Activated T-helper 2 cell treated with anti-CD3 and anti-CD28 coated beads, Interferon-gamma antibody, Interleukin-2, Interleukin-4, amounts not matched to agents 10 μg/mL and 5 μg/mL and 100 μg/mL, durations not matched to agents 14 hours and 24 hours and 36 hours (primary cell): ENCODE measurements at regions of chr12 and their contacts with region 1.

Region 1: DNA sequence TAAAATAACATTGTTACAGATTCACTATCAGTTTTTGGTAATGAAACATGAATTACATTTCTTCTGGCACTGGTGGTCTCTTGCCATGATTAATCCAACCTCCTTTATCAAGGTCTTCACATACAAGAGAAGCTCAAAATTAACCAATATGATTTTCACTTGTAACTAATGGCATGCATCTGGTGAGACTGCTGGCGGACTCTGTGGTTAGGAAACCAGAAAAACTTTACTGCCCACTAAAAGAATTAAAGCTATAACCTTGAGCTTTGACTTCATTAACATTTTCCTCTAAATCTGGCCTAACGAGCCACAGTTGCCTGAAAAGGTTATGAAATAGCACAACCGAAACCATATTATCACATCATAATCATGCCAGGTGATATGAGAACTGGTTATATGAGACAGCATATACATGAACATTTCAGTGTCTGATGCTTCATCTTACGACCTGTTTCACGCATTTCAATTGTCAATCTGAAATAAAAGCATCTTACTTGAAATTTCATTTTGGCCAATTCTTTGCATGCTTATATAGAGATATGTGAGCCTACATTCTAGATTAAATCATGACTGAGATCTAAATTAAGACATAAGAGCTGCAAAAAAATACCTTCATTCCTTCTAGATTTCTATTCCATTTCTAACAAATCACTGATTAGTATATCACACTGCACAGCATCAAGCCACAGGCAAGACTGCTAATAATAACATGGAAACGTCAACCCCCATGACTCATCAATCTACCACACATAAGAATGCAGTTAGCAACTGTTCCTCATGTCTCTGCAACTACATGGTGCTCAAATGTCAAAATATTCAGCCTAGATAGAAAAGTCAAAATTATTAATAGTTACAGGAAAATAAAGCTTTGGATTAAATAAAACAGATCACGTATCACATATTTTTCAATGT is 89.3 kb downstream of the OSBPL8 start:
- DNase-seq: no peak
- H3K4me3 Mint-ChIP-seq: no peak overlapping the region
- H3K27ac Mint-ChIP-seq: no peak overlapping the region
- H3K4me1 Mint-ChIP-seq: peaks cover 8% of the 10 kb centered on the region
- H3K27me3 Mint-ChIP-seq: no peaks in the 10 kb centered on the region

Region 2: GRCh38 chr12:75986001-75986746 is 484.1 kb before region 1 on chr12:
- intact Hi-C with region 1: no loop called
- DNase-seq: no peak
- H3K4me3 Mint-ChIP-seq: no peak overlapping the region
- H3K27ac Mint-ChIP-seq: peak overlapping the region; percentile 16
- H3K4me1 Mint-ChIP-seq: peaks cover 55% of the 10 kb centered on the region
- H3K27me3 Mint-ChIP-seq: no peaks in the 10 kb centered on the region

Region 3: DNA sequence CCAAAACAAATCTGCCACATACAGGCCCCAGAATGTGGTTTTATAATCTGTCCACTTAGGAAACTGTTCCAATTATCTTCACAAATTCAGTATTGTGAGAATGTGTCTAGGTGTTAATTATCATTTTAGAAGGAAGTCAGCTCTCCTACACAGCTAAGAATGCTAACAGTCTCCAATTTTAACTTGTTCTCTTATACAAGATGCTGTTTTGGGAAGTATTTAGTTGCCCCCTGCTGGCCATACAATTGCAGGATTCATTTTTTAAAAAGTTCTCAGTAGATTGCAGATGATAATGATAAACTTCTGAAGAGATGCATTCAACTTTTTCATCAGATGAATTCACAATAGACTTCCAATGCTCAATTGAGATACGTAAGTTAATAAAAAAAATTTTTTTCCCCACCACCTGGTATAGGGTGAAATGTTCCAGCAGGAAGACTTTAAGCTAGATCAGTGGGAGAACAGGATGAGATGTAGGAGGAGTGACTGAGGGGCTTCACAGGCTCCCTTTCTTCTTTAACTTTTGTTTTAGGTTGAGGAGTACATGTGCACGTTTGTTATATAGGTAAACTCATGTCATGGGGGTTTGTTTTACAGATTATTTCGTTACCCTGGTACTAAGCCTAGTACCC is 116.6 kb after region 1 on chr12:
- intact Hi-C with region 1: loop called (anchors 5 kb)
- DNase-seq: no peak
- H3K4me3 Mint-ChIP-seq: no peak overlapping the region
- H3K27ac Mint-ChIP-seq: no peak overlapping the region
- H3K4me1 Mint-ChIP-seq: peaks cover 6% of the 10 kb centered on the region
- H3K27me3 Mint-ChIP-seq: peaks cover 3% of the 10 kb centered on the region